OCI-LY7 (cell line): ENCODE measurements at regions of chr3 and their contacts with region 1.

Region 1: GRCh38 chr3:139716908-139717485 is 39.2 kb upstream of the NMNAT3 start:
- DNase-seq: no peak
- H3K4me3 ChIP-seq: no peak overlapping the region
- H3K27ac ChIP-seq: no peak overlapping the region
- H3K4me1 ChIP-seq: no peaks in the 10 kb centered on the region
- CTCF ChIP-seq: no peak

Region 2: GRCh38 chr3:139389458-139390209 is 327.4 kb before region 1 on chr3 and contains the start of gene COPB2:
- CTCF ChIA-PET with region 1: no interaction called
- POLR2A ChIA-PET with region 1: no interaction called
- intact Hi-C with region 1: no loop called
- DNase-seq: peak; percentile 98
- H3K4me3 ChIP-seq: peak within 1 kb of the TSS; percentile 98
- H3K27ac ChIP-seq: peak within 1 kb of the TSS; percentile 52
- H3K4me1 ChIP-seq: peaks cover 25% of the 10 kb centered on the region
- CTCF ChIP-seq: no peak
- total RNA-seq, gene COPB2: 67.9 and 73.1 TPM in 2 replicates

Region 3: GRCh38 chr3:140467796-140468315 is 750.9 kb after region 1 on chr3:
- CTCF ChIA-PET with region 1: interaction called, 13 read pairs
- POLR2A ChIA-PET with region 1: no interaction called
- intact Hi-C with region 1: no loop called
- DNase-seq: no peak
- H3K4me3 ChIP-seq: no peak overlapping the region
- H3K27ac ChIP-seq: no peak overlapping the region
- H3K4me1 ChIP-seq: no peaks in the 10 kb centered on the region
- CTCF ChIP-seq: no peak